GM18951 (cell line): ENCODE measurements at regions of chr4 and their contacts with region 1.

Region 1: DNA sequence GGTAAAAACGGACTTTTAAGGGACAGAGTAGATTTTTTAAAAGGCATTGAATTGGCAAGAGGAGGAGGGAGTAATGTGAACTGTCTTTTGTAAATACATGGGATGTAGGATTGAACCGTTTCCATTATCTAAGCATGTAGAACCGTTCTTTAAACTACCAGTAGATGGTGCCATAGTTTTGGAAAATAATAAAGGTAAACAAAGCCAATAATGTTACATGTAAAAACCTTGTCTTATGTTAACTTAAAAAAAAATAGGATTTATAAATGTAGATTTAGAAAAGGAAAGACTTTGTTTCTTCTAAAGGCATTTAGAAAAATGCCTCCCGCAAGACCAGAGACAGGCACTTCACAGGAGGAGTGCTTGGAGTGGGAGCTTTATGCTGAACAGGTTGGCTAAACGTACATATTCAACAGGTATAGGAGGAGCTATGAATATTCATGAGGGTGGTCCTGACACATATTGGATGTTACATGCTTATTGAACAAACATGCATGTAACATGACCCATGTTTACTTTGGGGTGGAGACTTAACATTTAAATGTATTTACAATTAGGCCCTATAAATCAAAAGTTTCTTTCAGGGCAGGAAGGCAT is 45.5 kb upstream of the FAM241A start:
- POLR2A ChIP-seq: no peak

Region 2: DNA sequence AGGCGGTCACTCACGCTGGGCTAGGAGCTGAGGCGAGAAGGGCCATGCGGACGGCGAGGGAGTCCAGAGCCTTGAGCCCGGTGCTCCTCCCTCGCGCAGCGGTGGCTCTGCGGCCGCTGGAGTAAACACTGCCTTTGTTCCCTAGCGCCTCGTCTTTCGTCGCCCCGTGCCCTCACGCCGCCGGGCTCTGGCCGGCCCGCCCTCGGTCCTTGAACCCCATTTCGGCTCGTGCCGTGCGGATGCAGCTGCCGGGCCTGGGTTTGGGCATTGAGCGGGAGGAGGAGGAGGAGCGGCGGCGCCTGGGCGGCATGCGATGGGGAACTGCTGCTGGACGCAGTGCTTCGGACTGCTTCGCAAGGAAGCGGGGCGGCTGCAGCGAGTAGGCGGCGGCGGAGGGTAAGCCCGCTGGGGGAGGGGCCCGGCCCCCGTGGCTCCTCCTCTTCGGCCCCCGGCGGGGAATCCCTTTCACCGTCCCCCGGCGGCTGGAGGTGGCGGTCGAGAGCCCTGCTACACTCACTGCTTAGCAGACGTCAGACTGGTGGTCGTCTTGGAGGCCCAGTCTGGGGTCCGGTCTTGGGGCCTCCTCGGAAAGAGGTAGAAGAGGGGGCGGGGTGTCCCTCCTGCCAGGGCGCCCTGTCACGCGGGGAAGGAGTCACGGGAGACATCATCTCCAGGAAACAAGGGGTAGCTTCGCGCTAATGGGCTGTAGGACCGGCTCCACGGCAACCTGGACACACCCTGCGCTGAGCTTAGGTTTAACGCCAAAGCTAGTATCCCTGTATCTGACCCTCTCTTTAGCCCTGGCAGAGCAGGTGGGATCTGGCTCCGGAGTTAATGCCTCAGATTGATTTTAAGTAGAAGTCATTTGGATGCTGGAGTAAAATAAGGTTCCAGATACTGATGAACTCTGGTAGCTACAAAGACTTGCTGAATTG is 132.2 kb after region 1 on chr4 and contains the start of gene AP1AR:
- in situ Hi-C with region 1: loop called (anchors 5 kb)
- POLR2A ChIP-seq: peak; percentile 80

Region 3: DNA sequence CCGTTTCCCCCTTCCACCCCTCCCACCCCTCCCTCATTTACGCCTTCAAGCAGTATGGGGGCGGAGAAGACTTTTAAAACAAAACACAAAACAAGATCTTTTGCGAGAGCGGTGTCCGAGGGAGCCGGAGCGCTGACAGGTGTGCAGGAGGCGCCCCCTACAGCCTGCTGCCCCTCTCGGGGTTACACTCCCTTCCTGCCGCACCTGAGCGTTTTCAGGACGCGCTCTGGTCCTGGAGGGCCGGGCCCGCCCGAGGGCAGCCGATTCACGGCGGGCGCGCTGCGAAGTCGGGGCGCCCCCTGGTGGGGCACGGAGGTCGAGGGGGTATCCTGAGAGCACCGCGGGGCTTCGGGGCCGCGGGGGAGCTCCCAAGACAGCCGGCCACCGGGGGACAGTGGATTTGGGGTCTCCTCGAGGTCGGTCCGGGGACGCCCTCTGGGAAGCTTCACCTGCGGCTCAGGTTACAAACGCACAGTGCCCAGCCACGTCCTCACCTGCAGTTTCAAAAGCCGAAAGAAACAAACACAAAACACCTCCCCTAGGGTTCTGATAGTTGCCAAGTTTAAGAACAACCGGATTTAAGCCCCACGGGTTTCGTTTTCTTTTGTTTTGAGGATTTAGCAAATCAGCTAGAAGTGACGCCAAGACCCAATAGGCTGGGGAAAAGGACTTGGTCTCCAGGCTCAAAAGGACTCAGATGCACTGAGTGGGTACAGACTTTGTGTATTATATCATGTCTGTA is 424.1 kb after region 1 on chr4:
- in situ Hi-C with region 1: loop called (anchors 10 kb)
- POLR2A ChIP-seq: no peak